Right ventricle myocardium superior (tissue), 1 donor: ENCODE measurements at regions of chr20 and their contacts with region 1.

Region 1: DNA sequence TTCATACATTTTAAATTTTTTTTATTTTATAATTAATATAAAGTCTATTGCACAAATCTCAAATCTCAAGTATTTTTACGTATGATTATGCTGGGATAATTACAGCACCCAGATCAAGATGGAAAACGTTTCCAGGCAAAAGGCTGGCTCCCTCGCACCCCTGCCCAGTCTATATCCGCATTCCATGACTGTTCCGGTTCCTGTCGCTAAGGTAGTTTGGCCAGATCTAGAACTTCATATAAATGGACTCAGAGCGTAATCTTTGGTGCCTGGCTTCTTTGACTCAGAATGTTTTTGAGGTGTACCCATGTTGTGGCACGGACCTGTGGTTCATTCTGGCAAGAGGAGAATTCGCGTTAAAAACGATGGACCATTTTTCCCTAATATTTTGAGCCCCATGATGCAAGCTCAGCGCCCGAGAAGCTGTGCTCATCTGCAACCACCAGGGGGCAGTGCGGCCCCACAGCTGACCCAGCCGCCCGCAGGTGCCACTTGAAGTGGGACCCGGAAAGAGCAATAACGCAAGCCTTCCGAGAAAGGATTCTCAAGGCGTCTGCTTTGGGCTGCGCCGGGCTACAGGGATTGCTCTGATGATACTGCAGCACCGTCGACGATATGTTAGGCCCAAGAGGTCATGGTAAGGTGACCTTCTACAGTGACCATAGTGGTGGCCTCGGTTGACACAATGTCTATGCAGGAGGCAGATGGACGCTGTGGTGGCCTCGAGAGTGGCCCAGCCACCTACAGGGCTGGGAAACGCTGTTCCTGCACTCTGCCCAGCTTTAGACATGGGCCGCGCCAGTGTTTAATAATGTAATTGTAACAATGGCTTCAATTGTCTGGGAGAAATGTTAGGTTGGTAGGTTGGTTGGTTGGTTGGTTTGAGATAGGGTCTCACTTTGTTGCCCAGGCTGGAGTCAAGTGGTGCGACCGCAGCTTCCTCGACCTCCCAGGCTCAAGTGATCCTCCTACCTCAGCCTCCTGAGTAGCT is 160.1 kb downstream of the ZMYND8 start:
- DNase-seq: peak; percentile 80
- ATAC-seq: peak; percentile 91

Region 2: GRCh38 chr20:47379433-47380150 is 183.2 kb after region 1 on chr20:
- intact Hi-C with region 1: loop called (anchors 5 kb)
- DNase-seq: no peak
- ATAC-seq: no peak

Region 3: DNA sequence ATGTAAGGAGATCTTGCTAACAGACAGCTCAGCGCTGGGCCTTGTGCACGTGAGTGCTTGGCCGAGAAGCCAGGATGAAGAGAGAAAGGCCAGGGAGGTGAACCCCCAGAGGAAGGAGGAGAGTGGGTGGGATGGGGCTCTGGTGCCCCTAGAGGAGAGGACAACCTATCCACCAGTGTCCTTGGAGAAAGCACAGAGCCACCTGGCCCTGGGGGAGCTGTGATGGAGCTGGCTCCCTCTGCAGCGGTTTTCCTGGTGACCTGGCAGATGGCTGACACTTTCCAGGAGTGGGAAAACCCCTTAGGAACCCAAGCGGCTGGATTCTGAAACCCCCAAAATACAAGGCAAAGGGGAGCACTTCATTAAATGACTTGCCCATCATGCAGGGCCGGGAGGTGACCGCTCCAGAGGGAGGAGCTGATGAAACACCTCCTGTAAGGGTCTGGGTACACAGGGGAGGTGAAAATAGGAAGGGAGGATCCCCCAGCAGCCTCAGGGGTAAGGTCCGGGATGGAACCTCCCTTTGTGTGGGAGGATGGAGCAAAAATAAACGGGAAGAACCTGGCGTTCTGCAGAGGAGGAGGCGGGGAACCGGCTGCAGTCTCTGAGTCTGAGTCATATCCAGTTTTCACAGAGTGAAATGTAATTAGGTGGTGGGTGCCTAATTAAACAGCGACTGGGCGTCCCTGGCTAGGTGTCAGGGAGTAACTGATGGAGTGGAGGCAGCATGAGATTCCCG is 508.5 kb after region 1 on chr20:
- intact Hi-C with region 1: no loop called
- DNase-seq: peak; percentile 58
- ATAC-seq: peak; percentile 56